Natural killer cell (primary cell): ENCODE measurements at regions of chr3 and their contacts with region 1.

Region 1: DNA sequence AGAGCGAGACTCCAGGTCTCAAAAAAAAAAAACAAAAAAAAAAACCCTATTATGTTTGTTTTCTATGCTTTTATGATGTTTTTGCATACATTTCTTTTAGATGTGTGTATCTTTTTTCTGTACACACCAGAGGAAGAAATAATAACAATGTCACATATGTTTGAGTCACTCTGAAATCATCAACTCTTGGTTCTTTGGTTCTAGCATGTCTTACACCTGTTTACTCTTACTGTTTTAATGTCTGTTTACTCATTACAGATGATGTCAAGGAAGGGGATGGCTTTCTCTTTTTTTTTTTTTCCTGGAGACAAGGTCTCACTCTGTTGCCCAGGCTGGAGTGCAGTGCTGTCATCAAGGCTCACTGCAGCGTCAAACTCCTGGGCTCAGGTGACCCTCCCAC is 24.1 kb downstream of the RHOA start:
- DNase-seq: no peak
- ATAC-seq: peak in 2 of 3 donors; percentile 25 to 47
- H3K4me3 ChIP-seq: no peak overlapping the region
- H3K4me3 Mint-ChIP-seq: no peak overlapping the region
- H3K27ac ChIP-seq: no peak overlapping the region
- H3K27ac Mint-ChIP-seq: peak overlapping the region; percentile 79 to 83
- H3K4me1 ChIP-seq: peaks cover 41% of the 10 kb centered on the region
- H3K4me1 Mint-ChIP-seq: peaks cover 49 to 57% of the 10 kb centered on the region in 2 donors
- H3K27me3 ChIP-seq: no peaks in the 10 kb centered on the region
- H3K27me3 Mint-ChIP-seq: no peaks in the 10 kb centered on the region
- CTCF ChIP-seq: no peak

Region 2: GRCh38 chr3:49445381-49445780 is 57.7 kb after region 1 on chr3:
- intact Hi-C with region 1: loop called (anchors 5 kb)
- DNase-seq: no peak
- ATAC-seq: no peak
- H3K4me3 ChIP-seq: no peak overlapping the region
- H3K4me3 Mint-ChIP-seq: no peak overlapping the region
- H3K27ac ChIP-seq: no peak overlapping the region
- H3K27ac Mint-ChIP-seq: peak overlapping the region; percentile 76 to 86
- H3K4me1 ChIP-seq: peaks cover 17% of the 10 kb centered on the region
- H3K4me1 Mint-ChIP-seq: peaks cover 5 to 11% of the 10 kb centered on the region in 2 donors
- H3K27me3 ChIP-seq: no peaks in the 10 kb centered on the region
- H3K27me3 Mint-ChIP-seq: no peaks in the 10 kb centered on the region
- CTCF ChIP-seq: no peak